Right ventricle myocardium inferior (tissue), 1 donor: ENCODE measurements at regions of chr5 and their contacts with region 1.

Region 1: DNA sequence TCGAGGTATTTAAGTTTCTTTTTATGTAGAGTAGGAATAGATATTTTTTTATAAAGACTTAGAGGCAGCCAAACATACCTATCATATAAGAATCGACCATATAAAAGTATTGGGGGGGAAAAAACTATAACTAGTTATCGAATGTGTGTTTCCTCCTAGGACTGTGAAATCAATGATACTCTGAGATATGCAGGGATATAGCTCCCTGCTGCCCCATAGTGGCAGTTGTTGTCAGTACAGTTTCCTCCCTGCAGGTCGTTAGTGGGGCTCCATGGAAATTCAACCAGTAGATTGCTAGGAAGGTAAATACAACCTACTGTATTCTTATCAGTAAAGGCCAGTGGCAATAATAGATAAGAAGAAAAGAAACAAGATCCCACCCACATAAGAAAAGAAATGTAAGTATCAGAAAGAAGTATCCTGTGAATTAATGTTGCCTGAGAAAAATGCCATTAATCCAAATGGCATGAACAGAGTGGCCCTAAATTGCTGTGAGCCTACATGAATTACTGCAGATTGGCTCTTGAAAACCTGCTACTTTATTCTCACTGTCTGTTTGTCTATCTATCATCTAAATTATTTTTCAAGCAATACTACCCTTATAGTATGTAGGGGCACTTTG is 136.9 kb upstream of the FBN2 start:
- DNase-seq: no peak
- ATAC-seq: no peak

Region 2: DNA sequence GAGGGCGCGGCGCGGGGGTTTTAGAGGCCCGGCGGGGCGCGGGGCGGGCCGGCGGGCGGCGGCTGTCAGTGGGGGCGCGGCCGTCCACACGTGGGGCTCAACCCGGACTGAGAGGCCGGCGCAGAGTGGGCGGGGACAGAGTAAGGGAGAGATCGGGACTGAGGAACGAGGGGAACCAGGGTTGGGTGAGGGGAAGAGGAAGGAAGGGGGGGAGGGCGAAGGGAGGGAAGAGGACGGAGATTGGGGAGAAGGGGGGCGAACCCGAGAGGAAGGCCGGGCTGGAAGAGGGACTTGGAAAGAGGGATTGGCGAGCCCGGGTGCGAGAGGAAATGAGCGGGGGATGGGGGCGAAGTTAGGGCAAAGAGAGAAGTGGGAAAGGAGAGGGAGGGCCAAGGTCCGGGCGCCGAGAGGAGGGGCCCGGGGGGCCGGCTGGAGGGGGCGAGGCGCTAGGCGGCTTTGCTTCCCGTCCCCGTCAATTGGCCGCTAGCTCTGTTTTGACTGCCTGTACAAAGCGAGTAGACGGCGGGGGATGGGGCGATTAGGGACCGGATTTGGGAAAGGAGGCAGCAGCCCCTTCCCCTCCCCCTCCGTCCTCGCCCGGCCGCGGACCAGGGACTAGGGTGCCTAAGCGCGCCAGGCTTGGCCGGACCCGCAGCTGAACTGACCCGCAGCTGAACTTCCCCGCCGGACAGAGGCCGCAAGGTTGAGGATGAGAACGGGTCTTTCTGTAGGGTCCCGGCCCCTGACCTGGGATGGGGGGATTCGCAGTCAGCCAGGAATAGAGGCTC is 136.5 kb before region 1 on chr5:
- intact Hi-C with region 1: loop called (anchors 10 kb)
- DNase-seq: peak; percentile 89
- ATAC-seq: peak; percentile 90

Region 3: DNA sequence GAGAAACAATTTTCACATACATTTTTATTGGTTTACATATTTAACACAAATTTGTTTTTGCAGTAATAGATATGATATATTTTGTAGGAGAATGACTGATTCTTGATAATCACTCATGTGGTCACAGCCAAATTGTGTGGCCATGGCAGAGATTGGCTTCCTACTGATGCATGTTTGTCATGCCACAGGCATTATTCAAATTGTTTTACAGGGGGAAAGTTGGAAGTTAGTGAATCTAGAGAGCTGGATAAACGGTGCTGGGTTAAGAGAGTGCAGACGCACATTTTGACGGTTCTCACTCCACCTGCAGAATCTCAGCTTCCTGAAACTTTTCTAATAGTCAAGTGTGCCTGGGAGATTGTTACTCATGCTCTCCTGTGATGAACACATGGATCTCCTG is 45.8 kb before region 1 on chr5:
- intact Hi-C with region 1: no loop called
- DNase-seq: no peak
- ATAC-seq: no peak